ENCODE measurements at regions of chr5 and their contacts with region 1.

Region 1: GRCh38 chr5:34898258-34898895 is 16.9 kb downstream of the RAD1 start:
- DNase-seq: peak; percentile 49
- H3K4me3 ChIP-seq: no peak overlapping the region
- H3K27ac ChIP-seq: no peak overlapping the region
- H3K27me3 ChIP-seq: no peaks in the 10 kb centered on the region
- CTCF ChIP-seq: peak; percentile 92

Region 2: GRCh38 chr5:34474573-34475021 is 423.8 kb before region 1 on chr5:
- CTCF ChIA-PET with region 1: interaction called, 152 read pairs
- POLR2A ChIA-PET with region 1: no interaction called
- DNase-seq: peak; percentile 44
- H3K4me3 ChIP-seq: no peak overlapping the region
- H3K27ac ChIP-seq: no peak overlapping the region
- H3K27me3 ChIP-seq: no peaks in the 10 kb centered on the region
- CTCF ChIP-seq: peak; percentile 99

Region 3: DNA sequence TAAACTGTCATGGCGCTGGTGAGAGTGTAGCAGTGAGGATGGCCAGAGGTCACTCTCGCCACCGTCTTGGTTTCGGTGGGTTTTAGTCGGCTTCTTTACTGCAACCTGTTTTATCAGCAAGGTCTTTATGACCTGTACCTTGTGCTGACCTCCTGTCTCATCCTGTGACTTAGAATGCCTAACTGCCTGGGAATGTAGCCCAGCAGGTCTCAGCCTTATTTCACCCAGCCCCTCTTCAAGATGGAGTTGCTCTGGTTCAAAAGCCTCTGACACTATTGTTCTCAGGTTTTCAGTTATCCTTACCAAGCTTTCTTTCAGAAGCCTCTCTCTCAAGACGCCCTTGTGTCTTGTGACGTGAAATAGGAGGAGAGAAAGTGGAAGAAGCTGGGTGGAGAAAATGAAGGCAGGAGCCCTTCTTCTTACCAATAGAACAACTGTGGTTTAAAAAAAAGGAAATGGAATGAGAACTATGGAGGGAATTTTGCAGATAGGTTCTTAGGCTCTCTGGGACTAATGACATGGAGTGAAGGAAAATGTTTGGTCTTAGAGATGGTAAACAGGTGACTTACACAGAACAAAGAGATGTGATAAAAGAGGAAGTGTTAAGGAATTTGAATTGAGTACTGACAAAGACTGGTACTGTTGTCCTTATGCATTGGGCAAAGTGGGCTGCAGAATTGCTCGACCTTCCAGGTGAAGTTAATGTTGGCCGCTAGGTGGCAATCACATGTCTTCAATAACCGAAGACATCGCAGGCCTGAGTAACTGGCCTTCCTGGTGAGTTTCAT is 375.6 kb before region 1 on chr5:
- CTCF ChIA-PET with region 1: interaction called, 23 read pairs
- POLR2A ChIA-PET with region 1: no interaction called
- DNase-seq: peak; percentile 79
- H3K4me3 ChIP-seq: no peak overlapping the region
- H3K27ac ChIP-seq: peak overlapping the region; percentile 54
- H3K27me3 ChIP-seq: no peaks in the 10 kb centered on the region
- CTCF ChIP-seq: peak; percentile 74

Region 4: GRCh38 chr5:34886392-34887119 is 11.8 kb before region 1 on chr5:
- CTCF ChIA-PET with region 1: interaction called, 19 read pairs
- POLR2A ChIA-PET with region 1: no interaction called
- DNase-seq: no peak
- H3K4me3 ChIP-seq: no peak overlapping the region
- H3K27ac ChIP-seq: no peak overlapping the region
- H3K27me3 ChIP-seq: peaks cover 6% of the 10 kb centered on the region
- CTCF ChIP-seq: no peak

Region 5: GRCh38 chr5:34915139-34915855 is 16.9 kb after region 1 on chr5 and contains the starts of genes BRIX1 and RAD1:
- CTCF ChIA-PET with region 1: interaction called, 18 read pairs
- POLR2A ChIA-PET with region 1: no interaction called
- DNase-seq: peak; percentile 90
- H3K4me3 ChIP-seq: peak within 1 kb of the TSS; percentile 98
- H3K27ac ChIP-seq: peak within 1 kb of the TSS; percentile 77
- H3K27me3 ChIP-seq: no peaks in the 10 kb centered on the region
- CTCF ChIP-seq: no peak
- polyA plus RNA-seq, gene BRIX1: 34.3 and 49.2 TPM in 2 replicates
- polyA plus RNA-seq, gene RAD1: 34.5 and 40.9 TPM in 2 replicates

Region 6: DNA sequence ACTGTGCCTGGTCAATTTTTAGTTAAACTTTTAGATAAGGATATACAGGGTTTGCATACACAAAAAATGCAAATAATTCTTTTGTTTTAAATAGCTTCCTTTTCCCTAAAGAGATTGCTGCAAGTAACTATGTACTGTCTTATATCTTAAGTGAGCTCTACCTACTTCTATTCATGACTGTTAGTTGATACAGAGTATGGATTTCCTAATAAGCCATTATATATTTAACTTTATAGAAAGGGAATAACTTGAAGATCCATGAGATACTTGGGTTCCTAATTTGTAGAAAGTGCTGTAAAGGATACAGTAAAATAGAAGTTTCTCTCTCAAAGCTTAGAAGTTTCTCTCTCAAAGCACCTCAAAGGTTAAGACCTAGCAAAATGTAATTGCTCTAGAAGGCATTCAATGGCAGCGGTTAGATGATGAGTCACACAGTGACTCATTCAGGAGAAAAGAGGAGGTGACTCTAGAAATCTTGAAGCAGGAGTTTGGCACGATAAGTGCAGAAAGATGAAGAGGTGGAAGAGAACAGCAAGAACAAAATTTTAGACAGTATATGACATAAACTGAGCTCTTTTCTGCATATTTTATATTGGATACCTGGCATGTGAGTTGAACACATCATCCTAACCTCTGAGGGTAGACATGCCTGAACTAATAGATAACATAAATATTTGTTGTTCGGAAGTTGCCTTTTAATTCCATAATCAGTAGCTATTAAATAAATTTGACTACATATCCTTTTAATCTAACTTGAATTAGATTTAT is 25.5 kb after region 1 on chr5:
- CTCF ChIA-PET with region 1: interaction called, 10 read pairs
- POLR2A ChIA-PET with region 1: no interaction called
- DNase-seq: peak; percentile 57
- H3K4me3 ChIP-seq: no peak overlapping the region
- H3K27ac ChIP-seq: no peak overlapping the region
- H3K27me3 ChIP-seq: no peaks in the 10 kb centered on the region
- CTCF ChIP-seq: no peak

Region 7: DNA sequence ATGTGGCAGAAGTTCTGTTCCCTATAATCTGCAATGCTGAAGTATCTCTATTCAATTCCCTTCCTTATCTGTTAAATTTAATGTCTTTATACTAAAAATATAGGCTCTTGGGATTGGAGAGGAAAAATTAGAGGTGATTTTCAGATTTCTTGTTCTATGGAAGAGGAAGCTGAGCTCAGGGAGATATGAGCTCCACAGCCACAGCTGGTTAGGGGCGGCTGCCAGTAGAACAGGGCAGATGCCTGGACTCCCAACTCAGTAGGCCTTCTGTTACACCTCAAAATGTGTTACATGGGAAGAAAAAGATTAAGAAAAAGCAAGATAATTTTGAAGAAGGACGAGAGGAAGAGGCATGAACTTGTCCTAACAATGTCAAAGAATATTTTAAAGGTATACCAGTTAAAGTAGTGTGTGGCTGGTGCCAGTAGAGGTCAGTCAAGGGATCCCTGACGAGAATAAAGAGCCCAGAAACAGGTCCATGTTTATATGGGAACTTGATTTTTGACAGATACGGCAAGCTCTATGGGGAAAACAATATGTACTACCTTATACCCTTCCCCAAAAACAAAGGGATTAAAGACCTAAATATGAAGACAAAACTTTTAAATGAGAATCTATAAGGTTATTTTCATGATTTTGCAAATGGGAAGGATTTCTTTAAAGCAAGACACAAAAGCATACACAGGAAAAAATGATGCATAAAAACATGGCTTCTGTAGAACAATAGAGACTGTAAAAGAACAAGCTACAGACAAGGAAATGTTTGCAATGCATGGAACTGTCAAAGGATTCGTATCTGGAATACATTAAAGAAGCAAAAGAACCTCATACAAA is 59.7 kb after region 1 on chr5:
- CTCF ChIA-PET with region 1: no interaction called
- POLR2A ChIA-PET with region 1: no interaction called
- DNase-seq: no peak
- H3K4me3 ChIP-seq: no peak overlapping the region
- H3K27ac ChIP-seq: no peak overlapping the region
- H3K27me3 ChIP-seq: no peaks in the 10 kb centered on the region
- CTCF ChIP-seq: peak; percentile 73

Region 8: GRCh38 chr5:35136386-35136785 is 238.0 kb after region 1 on chr5:
- CTCF ChIA-PET with region 1: no interaction called
- POLR2A ChIA-PET with region 1: no interaction called
- DNase-seq: peak; percentile 29
- H3K4me3 ChIP-seq: no peak overlapping the region
- H3K27ac ChIP-seq: no peak overlapping the region
- H3K27me3 ChIP-seq: peaks cover 2% of the 10 kb centered on the region
- CTCF ChIP-seq: no peak

Measured in AG04450 (cell line).